Natural killer cell (primary cell): ENCODE measurements at regions of chr3 and their contacts with region 1.

Region 1: DNA sequence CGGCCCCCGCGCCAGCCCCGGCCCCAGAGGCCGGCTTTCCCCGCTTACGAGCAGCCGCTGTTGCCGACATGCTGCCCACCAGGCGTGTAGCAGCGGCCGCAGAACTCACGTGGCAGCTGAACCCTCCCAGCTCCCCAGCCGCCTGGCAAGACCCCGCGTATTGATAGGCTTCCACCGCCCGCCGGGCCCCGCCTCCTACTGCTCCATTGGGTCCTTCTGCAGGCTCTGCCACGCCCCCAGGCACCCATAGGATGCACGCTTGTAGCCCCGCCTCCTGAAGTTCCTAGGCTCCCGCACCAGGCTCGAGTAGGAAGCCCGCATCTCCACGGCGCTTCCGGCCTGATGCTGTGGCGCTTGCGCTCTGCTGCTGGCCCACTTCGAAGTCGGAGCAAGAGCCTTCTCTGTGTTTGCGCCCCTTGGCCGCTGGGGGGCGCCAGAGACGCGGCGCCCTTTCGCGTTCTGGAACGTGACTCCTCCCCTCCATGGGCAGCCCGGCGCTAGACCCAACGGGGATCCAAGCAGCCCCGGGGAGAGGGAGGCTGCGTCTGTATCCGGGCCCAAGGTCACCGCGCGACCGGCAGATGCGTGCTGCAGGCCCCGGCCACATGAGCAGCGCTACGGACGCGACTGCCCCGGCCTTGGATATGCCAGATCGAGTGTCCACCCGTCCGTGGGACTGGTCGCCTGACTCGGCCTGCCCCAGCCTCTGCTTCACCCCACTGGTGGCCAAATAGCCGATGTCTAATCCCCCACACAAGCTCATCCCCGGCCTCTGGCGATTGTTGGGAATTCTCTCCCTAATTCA is at the starts of genes PARP3 and RRP9:
- DNase-seq: peak; percentile 98 to 100
- ATAC-seq: peak; percentile 91 to 98 (median 92)
- H3K4me3 ChIP-seq: peak within 1 kb of the TSS; percentile 77
- H3K4me3 Mint-ChIP-seq: peak within 1 kb of the TSS; percentile 97
- H3K27ac ChIP-seq: peak within 1 kb of the TSS; percentile 87
- H3K27ac Mint-ChIP-seq: peak within 1 kb of the TSS; percentile 79 to 88
- H3K4me1 ChIP-seq: peaks cover 32% of the 10 kb centered on the region
- H3K4me1 Mint-ChIP-seq: peaks cover 22 to 51% of the 10 kb centered on the region in 2 donors
- H3K27me3 ChIP-seq: no peaks in the 10 kb centered on the region
- H3K27me3 Mint-ChIP-seq: no peaks in the 10 kb centered on the region
- CTCF ChIP-seq: peak; percentile 97
- total RNA-seq, gene PARP3: 4.6 to 7.4 (median 5.6) TPM
- total RNA-seq, gene RRP9: 11.2 to 13.0 (median 12.7) TPM

Region 2: DNA sequence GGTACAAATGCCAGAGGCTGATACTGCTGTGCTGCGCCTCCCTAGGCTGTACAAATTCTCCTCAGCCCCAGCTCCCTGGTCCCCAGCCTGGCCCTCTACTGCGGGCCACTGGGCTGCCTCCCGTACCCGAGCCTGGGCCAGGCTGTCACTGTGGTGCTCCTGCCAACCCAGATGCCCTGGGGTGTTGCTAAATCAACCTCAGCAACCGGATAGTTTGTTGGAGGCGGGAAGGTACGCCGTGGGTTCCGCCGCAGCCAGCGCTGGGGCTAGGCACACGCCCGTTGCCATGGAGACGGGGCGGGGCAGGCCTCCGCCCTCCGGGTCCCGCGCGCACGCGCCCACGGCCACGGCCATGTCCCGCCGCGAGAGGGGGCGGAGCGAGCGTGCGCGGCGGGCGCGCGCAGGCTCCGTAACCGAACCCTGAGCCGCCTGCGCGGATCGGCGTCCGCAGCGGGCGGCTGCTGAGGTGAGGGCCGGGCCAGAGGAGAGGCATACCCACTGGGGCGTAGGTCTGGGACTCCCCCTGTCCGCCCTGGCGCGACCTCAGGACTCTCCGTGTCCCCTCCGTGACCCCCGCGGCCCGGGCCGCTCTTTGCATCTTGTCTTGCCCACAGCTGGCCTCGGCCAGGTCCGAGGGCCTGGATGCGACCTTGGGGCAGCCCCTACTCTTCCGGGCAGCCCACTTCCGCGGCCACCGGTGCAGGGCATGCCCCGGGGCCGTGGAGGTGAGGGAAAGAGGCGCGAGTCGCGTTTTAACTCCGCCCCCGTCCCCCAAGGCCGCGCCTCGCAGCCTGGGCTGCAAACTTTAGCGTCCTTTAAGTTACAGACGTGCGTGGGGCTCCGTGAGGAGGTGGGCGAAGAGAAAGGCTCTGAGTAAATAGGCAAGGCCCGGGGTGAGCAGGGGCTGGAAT is 270.9 kb before region 1 on chr3 and contains the start of gene TEX264:
- intact Hi-C with region 1: loop called (anchors 5 kb)
- DNase-seq: peak; percentile 86 to 100
- ATAC-seq: peak; percentile 69 to 89 (median 78)
- H3K4me3 ChIP-seq: peak within 1 kb of the TSS; percentile 86
- H3K4me3 Mint-ChIP-seq: peak within 1 kb of the TSS; percentile 92
- H3K27ac ChIP-seq: peak within 1 kb of the TSS; percentile 85
- H3K27ac Mint-ChIP-seq: peak within 1 kb of the TSS; percentile 87 to 98
- H3K4me1 ChIP-seq: peaks cover 58% of the 10 kb centered on the region
- H3K4me1 Mint-ChIP-seq: peaks cover 57 to 62% of the 10 kb centered on the region in 2 donors
- H3K27me3 ChIP-seq: no peaks in the 10 kb centered on the region
- H3K27me3 Mint-ChIP-seq: no peaks in the 10 kb centered on the region
- CTCF ChIP-seq: no peak
- total RNA-seq, gene TEX264: 41.1 to 46.8 (median 45.4) TPM

Region 3: GRCh38 chr3:51995346-51996163 is 53.6 kb after region 1 on chr3 and contains the start of gene RPL29:
- intact Hi-C with region 1: loop called (anchors 1 kb)
- DNase-seq: peak; percentile 85 to 97
- ATAC-seq: peak; percentile 97 to 98 (median 97)
- H3K4me3 ChIP-seq: peak within 1 kb of the TSS; percentile 91
- H3K4me3 Mint-ChIP-seq: peak within 1 kb of the TSS; percentile 100
- H3K27ac ChIP-seq: peak within 1 kb of the TSS; percentile 85
- H3K27ac Mint-ChIP-seq: peak within 1 kb of the TSS; percentile 98 to 100
- H3K4me1 ChIP-seq: peaks cover 20% of the 10 kb centered on the region
- H3K4me1 Mint-ChIP-seq: peaks cover 23 to 32% of the 10 kb centered on the region in 2 donors
- H3K27me3 ChIP-seq: no peaks in the 10 kb centered on the region
- H3K27me3 Mint-ChIP-seq: peaks cover 0 to 4% of the 10 kb centered on the region in 2 donors
- CTCF ChIP-seq: no peak
- total RNA-seq, gene RPL29: 486 to 819 (median 797) TPM

Region 4: GRCh38 chr3:52123106-52123725 is 181.2 kb after region 1 on chr3:
- intact Hi-C with region 1: loop called (anchors 1 kb)
- DNase-seq: peak; percentile 77 to 89
- ATAC-seq: peak; percentile 82 to 97 (median 94)
- H3K4me3 ChIP-seq: no peak overlapping the region
- H3K4me3 Mint-ChIP-seq: no peak overlapping the region
- H3K27ac ChIP-seq: peak overlapping the region; percentile 24
- H3K27ac Mint-ChIP-seq: no peak overlapping the region
- H3K4me1 ChIP-seq: peaks cover 39% of the 10 kb centered on the region
- H3K4me1 Mint-ChIP-seq: peaks cover 13 to 15% of the 10 kb centered on the region in 2 donors
- H3K27me3 ChIP-seq: no peaks in the 10 kb centered on the region
- H3K27me3 Mint-ChIP-seq: no peaks in the 10 kb centered on the region
- CTCF ChIP-seq: peak; percentile 92

Region 5: DNA sequence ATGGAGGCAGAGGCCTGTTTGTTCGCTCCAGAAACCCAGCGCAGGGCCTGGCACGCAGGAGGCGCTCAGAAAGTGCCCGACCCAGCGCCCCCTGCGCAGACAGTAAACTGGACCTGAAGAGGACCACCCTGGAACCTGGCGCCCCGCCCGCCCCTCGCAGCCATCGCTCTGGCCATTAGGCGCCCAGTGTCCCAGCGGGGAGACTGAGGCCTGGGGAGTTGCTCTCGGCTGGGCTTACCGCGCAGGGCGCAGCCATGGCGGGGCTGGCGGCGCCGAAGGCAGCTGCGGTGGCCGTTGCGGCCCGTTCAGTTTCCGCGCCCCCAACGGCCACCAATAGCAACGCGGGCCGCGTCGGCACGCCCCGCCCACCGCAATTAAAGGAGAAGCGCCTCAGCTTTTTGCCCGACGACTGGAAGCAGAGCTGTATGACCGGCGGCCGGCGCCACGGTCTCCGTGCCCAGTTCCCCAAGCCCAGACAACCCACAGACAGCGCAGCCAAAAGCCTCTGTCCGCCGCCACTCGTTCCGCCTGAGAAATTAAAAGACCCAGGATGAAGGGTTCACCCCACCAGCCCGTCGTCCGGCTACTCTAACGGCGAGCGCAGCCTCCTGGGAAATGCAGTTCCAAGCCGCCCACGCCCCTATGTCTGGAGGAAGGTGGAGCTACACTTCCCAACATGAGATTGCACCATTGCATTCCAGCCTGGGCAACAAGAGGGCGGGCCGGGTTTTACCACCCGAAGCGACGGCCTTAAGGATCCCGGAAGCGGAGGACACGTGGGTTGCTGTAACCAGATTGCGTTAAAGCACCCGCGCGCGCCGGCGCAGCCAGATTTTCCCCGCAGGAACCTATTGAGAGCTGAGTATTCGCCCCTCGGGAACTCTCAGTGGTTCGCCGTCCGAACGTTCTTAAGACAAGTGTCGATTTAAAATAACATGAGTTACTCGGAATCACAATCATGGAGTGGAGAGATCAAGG is 212.4 kb after region 1 on chr3 and contains the start of gene POC1A:
- intact Hi-C with region 1: loop called (anchors 2 kb)
- DNase-seq: peak; percentile 89 to 91
- ATAC-seq: peak; percentile 89 to 92 (median 91)
- H3K4me3 ChIP-seq: peak within 1 kb of the TSS; percentile 88
- H3K4me3 Mint-ChIP-seq: peak within 1 kb of the TSS; percentile 95
- H3K27ac ChIP-seq: peak within 1 kb of the TSS; percentile 71
- H3K27ac Mint-ChIP-seq: peak within 1 kb of the TSS; percentile 87 to 96
- H3K4me1 ChIP-seq: peaks cover 16% of the 10 kb centered on the region
- H3K4me1 Mint-ChIP-seq: peaks cover 10 to 14% of the 10 kb centered on the region in 2 donors
- H3K27me3 ChIP-seq: no peaks in the 10 kb centered on the region
- H3K27me3 Mint-ChIP-seq: no peaks in the 10 kb centered on the region
- CTCF ChIP-seq: peak; percentile 27
- total RNA-seq, gene POC1A: 1.3 to 2.6 (median 2.4) TPM

Region 6: GRCh38 chr3:52313774-52314188 is 371.8 kb after region 1 on chr3:
- intact Hi-C with region 1: no loop called
- DNase-seq: no peak
- ATAC-seq: no peak
- H3K4me3 ChIP-seq: no peak overlapping the region
- H3K4me3 Mint-ChIP-seq: no peak overlapping the region
- H3K27ac ChIP-seq: peak overlapping the region; percentile 55
- H3K27ac Mint-ChIP-seq: peak overlapping the region in 1 of 2 donors; percentile 92
- H3K4me1 ChIP-seq: peaks cover 61% of the 10 kb centered on the region
- H3K4me1 Mint-ChIP-seq: peaks cover 24 to 62% of the 10 kb centered on the region in 2 donors
- H3K27me3 ChIP-seq: no peaks in the 10 kb centered on the region
- H3K27me3 Mint-ChIP-seq: no peaks in the 10 kb centered on the region
- CTCF ChIP-seq: no peak